Activated CD4-positive, alpha-beta memory T cell treated with anti-CD3 and anti-CD28 coated beads for 36 hours (primary cell): ENCODE measurements at regions of chr18 and their contacts with region 1.

Region 1: DNA sequence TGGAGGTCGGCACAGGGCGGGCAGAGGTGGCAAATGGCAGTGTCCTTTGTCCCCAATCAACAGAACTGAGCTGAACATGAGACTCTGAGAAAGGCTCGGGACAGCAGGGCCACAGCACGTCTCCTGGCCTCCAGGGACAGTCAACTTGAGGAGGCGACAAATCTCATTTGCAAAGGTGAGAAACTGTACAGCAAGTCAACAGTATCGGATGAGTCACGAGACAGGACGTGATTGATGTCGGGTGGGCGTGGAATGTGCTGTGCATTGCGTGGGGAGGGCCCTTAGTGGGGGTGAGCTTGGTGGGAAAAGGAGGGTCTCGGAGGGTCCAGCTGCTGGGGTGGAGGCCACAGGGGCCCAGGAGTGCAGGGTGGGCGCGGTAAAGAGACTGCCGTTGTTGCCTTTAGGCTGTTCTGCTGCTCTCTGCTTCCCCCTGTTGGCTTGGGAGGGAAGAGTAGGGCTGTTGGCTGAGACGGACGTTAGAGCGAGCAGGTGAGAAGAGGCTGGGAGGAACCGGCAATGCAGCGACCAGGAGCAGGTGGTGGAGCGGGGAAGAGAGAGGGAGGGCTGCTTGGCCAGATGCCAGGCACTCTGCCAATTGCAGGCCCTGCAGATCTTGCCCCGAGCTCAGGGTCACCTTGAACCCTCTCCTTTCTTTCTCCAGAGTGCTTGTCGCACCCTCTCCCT is 164.3 kb downstream of the BCL2 start:
- DNase-seq: peak; percentile 91
- H3K4me3 Mint-ChIP-seq: peak overlapping the region; percentile 78
- H3K27ac Mint-ChIP-seq: peak overlapping the region; percentile 98
- H3K4me1 Mint-ChIP-seq: peaks cover 98% of the 10 kb centered on the region
- H3K27me3 Mint-ChIP-seq: no peaks in the 10 kb centered on the region

Region 2: DNA sequence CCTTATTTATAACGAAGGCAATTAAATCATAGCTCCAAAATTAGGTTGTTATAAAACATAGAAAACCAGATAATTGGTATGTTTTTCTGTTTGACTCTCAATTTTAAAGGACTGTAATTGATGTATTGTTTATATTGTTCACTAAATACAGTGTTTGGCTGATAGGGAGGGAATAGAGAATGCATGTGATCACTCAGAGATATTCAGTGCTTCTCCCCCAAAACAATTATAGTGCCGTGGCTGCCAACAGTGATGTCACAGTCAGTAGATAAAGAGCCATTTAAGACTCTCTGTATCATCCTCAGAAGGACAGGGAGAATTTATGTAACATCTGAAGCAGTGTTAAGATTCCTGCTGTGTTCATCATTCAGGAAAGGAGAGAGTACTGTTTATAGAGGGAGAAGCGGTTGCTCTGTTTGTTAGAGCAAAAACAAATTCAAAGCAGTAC is 370.3 kb before region 1 on chr18:
- CTCF ChIA-PET with region 1: no interaction called
- POLR2A ChIA-PET with region 1: no interaction called
- intact Hi-C with region 1: loop called (anchors 10 kb)
- DNase-seq: no peak
- H3K4me3 Mint-ChIP-seq: no peak overlapping the region
- H3K27ac Mint-ChIP-seq: peak overlapping the region; percentile 73
- H3K4me1 Mint-ChIP-seq: peaks cover 52% of the 10 kb centered on the region
- H3K27me3 Mint-ChIP-seq: peaks cover 3% of the 10 kb centered on the region

Region 3: GRCh38 chr18:63131106-63131958 is 24.0 kb before region 1 on chr18:
- CTCF ChIA-PET with region 1: interaction called, 24 read pairs
- POLR2A ChIA-PET with region 1: interaction called, 5 read pairs
- intact Hi-C with region 1: loop called (anchors 1 kb)
- DNase-seq: peak; percentile 64
- H3K4me3 Mint-ChIP-seq: no peak overlapping the region
- H3K27ac Mint-ChIP-seq: peak overlapping the region; percentile 65
- H3K4me1 Mint-ChIP-seq: peaks cover 30% of the 10 kb centered on the region
- H3K27me3 Mint-ChIP-seq: no peaks in the 10 kb centered on the region

Region 4: GRCh38 chr18:63199743-63200241 is 44.5 kb after region 1 on chr18:
- CTCF ChIA-PET with region 1: interaction called, 9 read pairs
- POLR2A ChIA-PET with region 1: interaction called, 13 read pairs
- intact Hi-C with region 1: no loop called
- DNase-seq: peak; percentile 59
- H3K4me3 Mint-ChIP-seq: no peak overlapping the region
- H3K27ac Mint-ChIP-seq: no peak overlapping the region
- H3K4me1 Mint-ChIP-seq: peaks cover 41% of the 10 kb centered on the region
- H3K27me3 Mint-ChIP-seq: no peaks in the 10 kb centered on the region

Region 5: DNA sequence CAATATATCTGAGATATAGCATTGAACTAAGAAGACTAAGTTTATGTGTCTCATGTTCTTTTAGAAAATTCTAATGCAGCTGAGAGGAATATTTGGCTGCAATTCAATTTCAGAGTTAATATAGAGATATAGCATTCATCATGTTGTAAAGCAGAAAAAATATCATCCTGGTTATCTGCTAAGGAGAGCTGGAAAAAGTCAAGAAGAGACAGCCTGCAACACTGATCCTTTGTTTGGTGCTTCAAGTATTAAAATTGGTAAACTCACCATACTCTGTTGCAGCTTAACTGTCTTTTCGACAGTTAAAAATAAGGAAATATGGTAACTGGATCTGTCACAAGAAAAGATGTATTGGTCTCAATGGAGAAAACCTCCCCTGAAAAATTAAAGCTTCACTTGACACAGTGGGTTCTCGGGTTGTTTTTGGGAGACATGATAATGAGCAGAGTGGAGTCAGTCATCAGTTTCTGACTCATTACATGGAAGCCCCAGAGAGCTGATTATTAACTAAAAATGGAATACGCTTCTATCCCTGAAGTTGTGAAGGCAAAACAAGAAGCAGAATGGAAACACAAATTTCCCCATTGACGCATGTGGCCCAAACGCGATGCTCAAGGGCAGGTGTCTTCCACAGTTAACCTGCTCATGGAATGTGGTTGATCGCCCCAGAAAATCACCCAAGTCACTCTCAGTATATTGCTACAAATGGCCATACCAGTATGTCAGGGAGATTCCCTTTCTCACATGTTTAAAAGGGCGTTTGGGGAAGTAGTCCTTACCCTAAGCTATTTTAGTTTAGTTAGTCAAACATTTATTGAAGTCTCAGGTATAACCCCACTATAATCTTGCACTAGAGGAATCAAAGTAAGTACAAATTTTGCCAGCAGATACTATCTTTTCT is 156.1 kb after region 1 on chr18:
- CTCF ChIA-PET with region 1: interaction called, 7 read pairs
- POLR2A ChIA-PET with region 1: interaction called, 14 read pairs
- intact Hi-C with region 1: no loop called
- DNase-seq: no peak
- H3K4me3 Mint-ChIP-seq: no peak overlapping the region
- H3K27ac Mint-ChIP-seq: peak overlapping the region; percentile 14
- H3K4me1 Mint-ChIP-seq: peaks cover 85% of the 10 kb centered on the region
- H3K27me3 Mint-ChIP-seq: no peaks in the 10 kb centered on the region

Region 6: GRCh38 chr18:63949068-63949737 is 793.9 kb after region 1 on chr18 and contains the start of gene HMSD:
- CTCF ChIA-PET with region 1: no interaction called
- POLR2A ChIA-PET with region 1: no interaction called
- intact Hi-C with region 1: loop called (anchors 5 kb)
- DNase-seq: peak; percentile 88
- H3K4me3 Mint-ChIP-seq: peak within 1 kb of the TSS; percentile 85
- H3K27ac Mint-ChIP-seq: peak within 1 kb of the TSS; percentile 86
- H3K4me1 Mint-ChIP-seq: peaks cover 45% of the 10 kb centered on the region
- H3K27me3 Mint-ChIP-seq: peaks cover 13% of the 10 kb centered on the region
- total RNA-seq, gene HMSD: 18.9 to 19.5 TPM